ENCODE measurements at regions of chr1 and their contacts with region 1.

Region 1: GRCh38 chr1:204819495-204819894 is 51.2 kb upstream of the NFASC start:
- DNase-seq: no peak

Region 2: DNA sequence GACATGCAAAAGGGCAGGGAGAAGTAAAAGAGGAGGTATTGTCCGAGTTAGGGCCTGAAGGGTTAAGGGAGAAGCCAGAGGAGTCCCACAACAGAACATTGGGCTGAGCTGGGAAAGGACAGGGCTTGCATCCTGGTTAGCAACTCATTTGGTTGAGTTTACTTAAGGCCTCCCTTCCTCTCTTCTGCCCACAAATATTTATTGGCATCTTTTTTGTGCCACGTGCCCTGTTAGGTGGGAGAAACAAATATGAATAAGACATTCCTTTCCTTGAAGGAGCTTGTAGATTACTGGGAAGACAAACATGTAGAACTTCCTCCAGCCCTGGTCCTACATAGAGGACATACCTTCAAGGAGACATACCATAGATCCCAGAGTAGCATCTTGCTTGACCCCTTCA is 1396.8 kb before region 1 on chr1:
- intact Hi-C with region 1: no loop called
- DNase-seq: no peak

Region 3: DNA sequence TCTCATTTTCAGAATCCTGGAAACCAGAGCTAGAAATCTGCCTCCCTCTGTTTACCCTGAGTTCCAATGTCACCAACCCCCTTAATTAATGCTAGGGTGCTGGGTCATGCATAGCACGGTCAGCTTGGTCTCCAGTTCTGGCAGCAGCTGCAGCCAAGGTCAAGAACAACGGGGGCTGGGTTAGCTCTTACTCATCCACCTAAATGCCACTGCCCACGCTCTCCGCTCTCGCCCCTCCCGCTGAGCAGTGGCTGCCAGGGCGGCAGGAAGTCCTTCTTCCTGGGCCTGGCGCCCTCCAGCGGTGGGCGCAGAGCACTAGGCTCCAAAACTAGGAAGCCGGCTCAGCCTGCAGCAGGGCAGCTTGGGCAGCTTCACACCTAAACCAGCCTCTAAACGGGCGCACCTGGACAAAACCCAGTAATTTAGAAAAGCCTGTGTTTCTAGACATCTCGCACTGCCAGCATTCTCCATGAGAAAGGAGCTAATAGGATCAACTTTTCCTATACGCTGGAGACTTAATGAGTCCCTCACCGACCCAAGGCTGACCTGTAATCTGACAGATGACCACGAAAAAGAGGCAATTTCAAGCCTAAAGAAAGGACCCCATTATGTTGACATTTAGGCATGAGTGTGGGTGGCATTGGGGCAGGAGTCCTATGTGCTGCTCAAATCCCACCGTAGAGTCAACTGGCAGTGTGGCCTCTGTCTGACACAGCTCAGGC is 55.6 kb before region 1 on chr1:
- intact Hi-C with region 1: no loop called
- DNase-seq: peak; percentile 94

Region 4: DNA sequence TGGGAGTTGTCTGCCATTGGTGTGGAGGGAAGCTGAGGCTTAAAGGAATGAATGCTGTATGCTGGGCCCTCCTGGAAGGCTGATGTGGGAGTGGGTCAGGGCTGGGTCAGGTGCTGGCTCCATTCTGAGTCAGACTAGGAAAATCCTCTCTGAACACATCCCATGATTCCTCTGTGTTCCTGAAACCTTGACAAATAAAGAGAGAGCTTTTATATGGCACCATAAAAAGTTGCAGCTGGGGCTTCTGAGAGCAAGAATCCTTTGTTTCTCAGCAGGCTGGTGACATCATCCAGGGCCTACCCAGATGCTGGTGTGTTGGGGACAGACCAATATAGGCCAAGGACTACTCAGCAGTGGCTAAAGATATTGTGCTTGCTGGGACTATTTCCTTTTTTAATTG is 23.4 kb after region 1 on chr1:
- intact Hi-C with region 1: no loop called
- DNase-seq: no peak

Region 5: DNA sequence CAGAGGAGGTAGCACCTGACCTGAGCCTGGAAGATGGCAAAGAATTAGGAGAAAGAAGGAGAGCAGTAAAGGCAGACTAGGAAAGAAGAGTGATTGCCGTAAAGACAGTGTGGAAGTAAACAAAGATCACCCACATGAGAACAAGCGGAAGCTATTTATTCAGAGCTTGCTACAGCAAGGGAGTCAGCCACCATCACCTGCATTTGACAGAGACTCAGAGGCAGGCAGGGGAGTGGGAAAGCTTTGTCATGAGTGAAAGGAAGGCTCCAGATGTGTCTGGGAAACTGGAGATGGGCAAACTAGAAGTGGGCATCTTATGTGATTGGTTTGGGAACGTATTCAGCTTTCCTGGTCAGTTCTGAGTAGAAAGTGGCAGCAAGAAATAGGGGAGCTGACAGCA is 115.7 kb after region 1 on chr1:
- intact Hi-C with region 1: loop called (anchors 1 to 5 kb)
- DNase-seq: no peak